Common myeloid progenitor, CD34-positive (primary cell): ENCODE measurements at regions of chr20 and their contacts with region 1.

Region 1: GRCh38 chr20:44683263-44684046 is 31.7 kb upstream of the CCN5 start:
- DNase-seq: peak; percentile 39 to 81 (median 75)
- H3K4me3 ChIP-seq: no peak overlapping the region
- H3K27ac ChIP-seq: no peak overlapping the region
- H3K4me1 ChIP-seq: peaks cover 0 to 17% (median 12%) of the 10 kb centered on the region in 4 experiments
- H3K27me3 ChIP-seq: no peaks in the 10 kb centered on the region

Region 2: GRCh38 chr20:44609511-44610312 is 73.7 kb before region 1 on chr20:
- CTCF ChIA-PET with region 1: interaction called, 23 read pairs
- POLR2A ChIA-PET with region 1: interaction called, 4 read pairs
- DNase-seq: peak; percentile 83 to 85 (median 83)
- H3K4me3 ChIP-seq: peak overlapping the region in 6 of 7 experiments; percentile 8 to 62 (median 30)
- H3K27ac ChIP-seq: peak overlapping the region; percentile 74 to 82
- H3K4me1 ChIP-seq: peaks cover 14 to 55% (median 33%) of the 10 kb centered on the region in 4 experiments
- H3K27me3 ChIP-seq: no peaks in the 10 kb centered on the region

Region 3: GRCh38 chr20:44642203-44643153 is 41.0 kb before region 1 on chr20:
- CTCF ChIA-PET with region 1: interaction called, 27 read pairs
- POLR2A ChIA-PET with region 1: no interaction called
- DNase-seq: peak in 2 of 3 donors; percentile 53 to 65
- H3K4me3 ChIP-seq: peak overlapping the region in 4 of 7 experiments; percentile 40 to 54 (median 47)
- H3K27ac ChIP-seq: peak overlapping the region; percentile 35 to 69
- H3K4me1 ChIP-seq: peaks cover 16 to 69% (median 62%) of the 10 kb centered on the region in 4 experiments
- H3K27me3 ChIP-seq: no peaks in the 10 kb centered on the region

Region 4: DNA sequence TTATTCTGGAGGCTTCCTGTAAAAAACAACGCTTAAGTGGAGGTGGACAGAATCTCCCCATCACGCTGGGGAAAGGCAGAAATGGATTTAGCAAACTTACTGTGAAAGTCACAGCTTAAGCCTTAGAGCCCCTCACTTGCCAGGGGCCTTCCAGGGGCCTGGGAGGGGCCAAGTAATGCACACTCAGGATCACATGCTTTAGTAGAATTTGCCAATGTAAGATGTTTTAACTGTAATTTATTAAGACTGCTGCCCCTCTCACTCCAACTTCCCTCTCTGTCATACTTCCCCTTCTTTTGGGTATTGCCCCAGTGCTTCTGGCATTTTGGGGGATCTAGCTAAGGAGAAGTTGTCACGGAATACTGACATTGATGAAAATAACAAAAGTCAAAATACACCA is 19.3 kb before region 1 on chr20:
- CTCF ChIA-PET with region 1: interaction called, 90 read pairs
- POLR2A ChIA-PET with region 1: no interaction called
- DNase-seq: peak; percentile 78 to 94 (median 91)
- H3K4me3 ChIP-seq: peak overlapping the region in 2 of 7 experiments; percentile 21 to 37
- H3K27ac ChIP-seq: peak overlapping the region; percentile 66 to 73
- H3K4me1 ChIP-seq: peaks cover 14 to 51% (median 34%) of the 10 kb centered on the region in 4 experiments
- H3K27me3 ChIP-seq: no peaks in the 10 kb centered on the region

Region 5: DNA sequence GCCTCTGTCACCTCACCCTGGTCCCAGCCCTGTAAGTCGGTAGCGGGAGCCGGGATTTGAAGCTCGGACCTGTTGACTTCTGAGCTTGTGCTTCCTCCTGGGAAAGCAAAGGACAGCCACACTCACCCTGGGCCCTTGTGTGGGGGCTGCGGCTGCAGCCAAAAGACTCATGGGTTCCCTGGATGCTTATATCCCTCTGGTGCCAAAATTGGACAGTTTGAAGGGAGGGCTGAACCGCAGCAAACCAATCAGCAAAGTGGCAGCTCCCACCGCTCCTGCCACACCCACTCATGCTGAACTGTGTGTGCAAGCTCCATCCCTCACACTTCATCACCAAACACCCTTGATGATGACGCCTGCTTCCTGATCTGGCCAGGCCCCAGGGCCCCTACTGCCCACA is 27.8 kb after region 1 on chr20:
- CTCF ChIA-PET with region 1: interaction called, 12 read pairs
- POLR2A ChIA-PET with region 1: interaction called, 3 read pairs
- DNase-seq: no peak
- H3K4me3 ChIP-seq: no peak overlapping the region
- H3K27ac ChIP-seq: no peak overlapping the region
- H3K4me1 ChIP-seq: peaks cover 0 to 13% (median 6%) of the 10 kb centered on the region in 4 experiments
- H3K27me3 ChIP-seq: no peaks in the 10 kb centered on the region

Region 6: GRCh38 chr20:44738813-44739477 is 55.5 kb after region 1 on chr20:
- CTCF ChIA-PET with region 1: interaction called, 130 read pairs
- POLR2A ChIA-PET with region 1: no interaction called
- DNase-seq: peak; percentile 67 to 83 (median 82)
- H3K4me3 ChIP-seq: no peak overlapping the region
- H3K27ac ChIP-seq: no peak overlapping the region
- H3K4me1 ChIP-seq: peaks cover 0 to 7% (median 4%) of the 10 kb centered on the region in 4 experiments
- H3K27me3 ChIP-seq: peaks cover 0 to 5% (median 0%) of the 10 kb centered on the region in 5 experiments

Region 7: GRCh38 chr20:44866703-44867335 is 183.4 kb after region 1 on chr20:
- CTCF ChIA-PET with region 1: interaction called, 11 read pairs
- POLR2A ChIA-PET with region 1: interaction called, 3 read pairs
- DNase-seq: peak in 2 of 3 donors; percentile 34 to 48
- H3K4me3 ChIP-seq: peak overlapping the region in 1 of 7 experiments; percentile 6
- H3K27ac ChIP-seq: no peak overlapping the region
- H3K4me1 ChIP-seq: peaks cover 0 to 10% (median 4%) of the 10 kb centered on the region in 4 experiments
- H3K27me3 ChIP-seq: peaks cover 0 to 3% (median 0%) of the 10 kb centered on the region in 5 experiments